Caco-2 (cell line): ENCODE measurements at regions of chr2 and their contacts with region 1.

Region 1: GRCh38 chr2:113795405-113795920 is 39.0 kb upstream of the SLC35F5 start:
- DNase-seq: no peak
- H3K4me3 ChIP-seq: no peak overlapping the region
- H3K4me3 Mint-ChIP-seq: no peak overlapping the region
- H3K27ac Mint-ChIP-seq: no peak overlapping the region
- H3K4me1 ChIP-seq: peaks cover 60% of the 10 kb centered on the region
- H3K4me1 Mint-ChIP-seq: peaks cover 43% of the 10 kb centered on the region
- H3K27me3 ChIP-seq: no peaks in the 10 kb centered on the region
- H3K27me3 Mint-ChIP-seq: no peaks in the 10 kb centered on the region
- CTCF ChIP-seq: no peak

Region 2: DNA sequence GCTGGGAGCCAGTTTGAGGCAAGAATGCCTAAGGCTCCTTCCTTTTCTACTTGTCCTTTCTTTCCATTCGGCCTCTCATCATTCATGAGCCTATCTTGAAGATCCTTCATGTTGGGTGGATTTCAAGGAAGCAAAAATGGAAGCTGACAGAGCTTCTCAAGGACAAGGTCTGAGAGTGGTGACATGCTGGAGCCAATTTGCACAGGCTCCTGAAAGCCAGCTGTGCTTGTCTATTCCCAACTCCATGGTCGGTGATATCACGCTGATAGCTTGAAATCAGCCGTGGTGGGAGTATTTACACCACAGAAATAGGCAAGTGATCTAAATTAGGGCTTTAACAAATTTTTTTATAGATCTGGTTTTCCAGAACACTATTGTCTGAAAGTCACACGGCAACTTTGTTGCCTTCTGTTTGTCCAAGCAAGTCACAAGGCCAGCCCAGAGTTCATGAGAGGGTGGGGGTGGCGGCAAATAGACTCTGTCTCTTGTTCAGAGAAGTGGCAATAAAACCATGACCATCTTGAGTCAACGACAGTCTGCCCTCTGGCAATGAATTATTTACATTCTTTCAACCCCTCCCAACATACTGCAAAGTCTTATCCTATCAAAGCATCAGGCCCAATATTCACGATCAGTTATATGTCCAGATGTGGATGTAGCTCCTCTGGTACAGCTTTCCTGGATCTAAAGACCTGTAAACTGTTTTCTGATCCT is 10.9 kb after region 1 on chr2:
- CTCF ChIA-PET with region 1: no interaction called
- POLR2A ChIA-PET with region 1: interaction called, 5 read pairs
- intact Hi-C with region 1: loop called (anchors 1 kb)
- DNase-seq: peak; percentile 79 to 90
- H3K4me3 ChIP-seq: no peak overlapping the region
- H3K4me3 Mint-ChIP-seq: no peak overlapping the region
- H3K27ac Mint-ChIP-seq: peak overlapping the region; percentile 81
- H3K4me1 ChIP-seq: peaks cover 52% of the 10 kb centered on the region
- H3K4me1 Mint-ChIP-seq: peaks cover 37% of the 10 kb centered on the region
- H3K27me3 ChIP-seq: no peaks in the 10 kb centered on the region
- H3K27me3 Mint-ChIP-seq: no peaks in the 10 kb centered on the region
- CTCF ChIP-seq: no peak

Region 3: GRCh38 chr2:113818382-113818951 is 23.0 kb after region 1 on chr2:
- CTCF ChIA-PET with region 1: no interaction called
- POLR2A ChIA-PET with region 1: interaction called, 8 read pairs
- intact Hi-C with region 1: loop called (anchors 1 kb)
- DNase-seq: peak; percentile 88 to 96
- H3K4me3 ChIP-seq: peak overlapping the region; percentile 9; the same call in 1 of the 2 replicates
- H3K4me3 Mint-ChIP-seq: peak overlapping the region; percentile 52
- H3K27ac Mint-ChIP-seq: peak overlapping the region; percentile 85
- H3K4me1 ChIP-seq: peaks cover 26% of the 10 kb centered on the region
- H3K4me1 Mint-ChIP-seq: peaks cover 22% of the 10 kb centered on the region
- H3K27me3 ChIP-seq: no peaks in the 10 kb centered on the region
- H3K27me3 Mint-ChIP-seq: no peaks in the 10 kb centered on the region
- CTCF ChIP-seq: no peak

Region 4: DNA sequence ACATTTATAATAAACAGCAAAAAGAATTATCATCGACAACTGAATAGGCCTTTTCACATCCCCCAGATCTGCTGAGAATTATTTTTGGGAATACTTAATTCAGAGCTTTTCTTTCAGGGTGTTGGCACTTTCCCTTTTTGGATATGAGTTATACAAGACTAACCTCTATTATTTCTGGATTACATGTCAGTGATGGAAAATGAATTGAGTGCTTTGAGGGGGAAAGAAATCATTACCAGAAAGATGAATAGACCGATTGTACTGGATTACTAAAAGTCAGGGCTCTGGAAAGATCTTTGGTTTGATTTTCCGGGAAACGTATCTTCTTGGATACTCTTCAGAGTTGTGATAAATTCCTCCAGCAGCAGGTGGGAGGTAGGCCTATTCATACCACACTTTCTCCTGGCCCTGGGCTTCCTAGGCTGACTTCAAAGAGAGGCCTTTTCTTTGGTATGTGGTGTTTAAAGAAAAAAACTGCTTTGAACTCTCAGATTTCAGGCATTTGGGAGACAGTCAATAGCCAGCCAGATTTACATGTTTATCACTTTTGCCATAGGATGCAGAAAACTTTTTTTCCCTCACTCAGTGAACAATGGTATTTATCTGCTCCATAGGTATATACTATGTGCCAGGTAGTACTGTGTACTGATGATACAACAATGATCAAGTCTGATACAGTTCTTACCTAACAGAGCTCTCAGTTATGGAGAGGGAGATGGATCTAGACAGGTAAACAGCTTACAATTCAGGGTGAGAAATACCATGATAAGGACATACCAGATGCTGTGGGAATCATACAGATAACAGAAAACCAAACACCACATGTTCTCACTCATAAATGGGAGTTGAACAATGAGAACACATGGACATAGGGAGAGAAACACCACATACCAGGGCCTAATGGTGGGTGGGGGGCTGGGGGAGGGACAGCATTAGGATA is 31.2 kb after region 1 on chr2:
- CTCF ChIA-PET with region 1: no interaction called
- POLR2A ChIA-PET with region 1: no interaction called
- intact Hi-C with region 1: loop called (anchors 1 kb)
- DNase-seq: peak; percentile 80 to 85
- H3K4me3 ChIP-seq: no peak overlapping the region
- H3K4me3 Mint-ChIP-seq: peak overlapping the region; percentile 39
- H3K27ac Mint-ChIP-seq: peak overlapping the region; percentile 92
- H3K4me1 ChIP-seq: peaks cover 54% of the 10 kb centered on the region
- H3K4me1 Mint-ChIP-seq: peaks cover 51% of the 10 kb centered on the region
- H3K27me3 ChIP-seq: no peaks in the 10 kb centered on the region
- H3K27me3 Mint-ChIP-seq: no peaks in the 10 kb centered on the region
- CTCF ChIP-seq: no peak

Region 5: GRCh38 chr2:113842919-113843736 is 47.7 kb after region 1 on chr2:
- CTCF ChIA-PET with region 1: no interaction called
- POLR2A ChIA-PET with region 1: no interaction called
- intact Hi-C with region 1: no loop called
- DNase-seq: no peak
- H3K4me3 ChIP-seq: no peak overlapping the region
- H3K4me3 Mint-ChIP-seq: no peak overlapping the region
- H3K27ac Mint-ChIP-seq: no peak overlapping the region
- H3K4me1 ChIP-seq: peaks cover 9% of the 10 kb centered on the region
- H3K4me1 Mint-ChIP-seq: peaks cover 9% of the 10 kb centered on the region
- H3K27me3 ChIP-seq: no peaks in the 10 kb centered on the region
- H3K27me3 Mint-ChIP-seq: no peaks in the 10 kb centered on the region
- CTCF ChIP-seq: no peak

Region 6: GRCh38 chr2:113889471-113890252 is 94.2 kb after region 1 on chr2 and contains the start of gene ACTR3:
- CTCF ChIA-PET with region 1: no interaction called
- POLR2A ChIA-PET with region 1: no interaction called
- intact Hi-C with region 1: loop called (anchors 1 kb)
- DNase-seq: peak; percentile 98 to 99
- H3K4me3 ChIP-seq: peak within 1 kb of the TSS; percentile 98
- H3K4me3 Mint-ChIP-seq: peak within 1 kb of the TSS; percentile 80
- H3K27ac Mint-ChIP-seq: peak within 1 kb of the TSS; percentile 53
- H3K4me1 ChIP-seq: peaks cover 49% of the 10 kb centered on the region
- H3K4me1 Mint-ChIP-seq: peaks cover 54% of the 10 kb centered on the region
- H3K27me3 ChIP-seq: no peaks in the 10 kb centered on the region
- H3K27me3 Mint-ChIP-seq: no peaks in the 10 kb centered on the region
- CTCF ChIP-seq: no peak
- total RNA-seq, gene ACTR3: 340 and 341 TPM in 2 replicates

Region 7: GRCh38 chr2:114714313-114714712 is 918.9 kb after region 1 on chr2:
- CTCF ChIA-PET with region 1: no interaction called
- POLR2A ChIA-PET with region 1: no interaction called
- intact Hi-C with region 1: no loop called
- DNase-seq: no peak
- H3K4me3 ChIP-seq: no peak overlapping the region
- H3K4me3 Mint-ChIP-seq: no peak overlapping the region
- H3K27ac Mint-ChIP-seq: no peak overlapping the region
- H3K4me1 ChIP-seq: no peaks in the 10 kb centered on the region
- H3K4me1 Mint-ChIP-seq: no peaks in the 10 kb centered on the region
- H3K27me3 ChIP-seq: no peaks in the 10 kb centered on the region
- H3K27me3 Mint-ChIP-seq: no peaks in the 10 kb centered on the region
- CTCF ChIP-seq: no peak